ENCODE measurements at regions of chr16 and their contacts with region 1.

Region 1: GRCh38 chr16:75486676-75487313 is 8.4 kb downstream of the CHST6 start:
- DNase-seq: no peak
- ATAC-seq: no peak
- H3K4me3 ChIP-seq: no peak overlapping the region
- H3K27ac ChIP-seq: no peak overlapping the region
- H3K4me1 ChIP-seq: no peaks in the 10 kb centered on the region
- H3K27me3 ChIP-seq: no peaks in the 10 kb centered on the region
- CTCF ChIP-seq: no peak
- POLR2A ChIP-seq: no peak

Region 2: DNA sequence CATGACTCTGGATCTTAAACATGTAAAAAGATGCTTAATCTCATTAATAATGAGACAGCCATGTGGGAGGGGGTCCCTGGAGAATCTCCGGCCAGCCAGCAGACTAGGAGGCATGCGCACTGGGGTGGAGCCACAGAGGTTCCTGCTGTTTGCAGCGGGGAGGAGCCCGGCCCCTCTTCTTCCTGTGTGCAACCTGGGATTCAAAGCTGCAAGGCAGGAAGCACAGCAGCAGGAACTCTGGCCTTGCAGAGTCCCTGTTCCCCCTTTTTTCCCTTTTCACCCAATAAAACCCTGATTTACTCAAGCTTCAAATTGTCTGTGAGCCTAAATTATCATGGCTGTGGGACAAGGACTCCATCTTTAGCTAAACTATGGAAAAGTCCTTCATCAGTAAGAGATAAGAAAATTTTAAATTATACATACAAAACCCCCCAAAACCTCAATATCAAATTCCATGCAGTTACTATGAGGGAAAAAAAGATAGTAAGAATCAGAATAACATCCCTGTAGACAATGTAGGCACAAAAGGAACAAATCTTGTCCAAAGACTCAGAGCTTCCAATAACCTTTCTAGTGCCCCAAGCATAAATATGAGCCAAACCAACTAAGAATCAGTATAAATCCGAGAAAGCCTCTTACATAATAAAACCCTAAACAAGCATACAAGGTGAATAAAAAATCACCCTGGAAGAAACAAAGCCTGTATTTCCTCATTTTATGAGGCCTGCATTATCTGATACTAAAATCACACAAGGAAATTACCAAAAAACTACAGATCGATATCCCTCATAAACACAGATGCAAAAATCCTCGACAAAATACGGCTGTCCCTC is 65.6 kb before region 1 on chr16:
- intact Hi-C with region 1: no loop called
- DNase-seq: peak; percentile 53 to 65 (median 56)
- ATAC-seq: peak; percentile 60 to 78 (median 70)
- H3K4me3 ChIP-seq: no peak overlapping the region
- H3K27ac ChIP-seq: no peak overlapping the region
- H3K4me1 ChIP-seq: peaks cover 0 to 6% (median 0%) of the 10 kb centered on the region in 4 donors
- H3K27me3 ChIP-seq: no peaks in the 10 kb centered on the region
- CTCF ChIP-seq: no peak
- POLR2A ChIP-seq: no peak

Region 3: GRCh38 chr16:75534560-75535205 is 47.9 kb after region 1 on chr16:
- intact Hi-C with region 1: loop called in 1 of 2 experiments (anchors 10 kb)
- DNase-seq: no peak
- ATAC-seq: no peak
- H3K4me3 ChIP-seq: no peak overlapping the region
- H3K27ac ChIP-seq: no peak overlapping the region
- H3K4me1 ChIP-seq: no peaks in the 10 kb centered on the region
- H3K27me3 ChIP-seq: no peaks in the 10 kb centered on the region
- CTCF ChIP-seq: no peak
- POLR2A ChIP-seq: no peak

Region 4: GRCh38 chr16:75622761-75623605 is 136.2 kb after region 1 on chr16 and contains the start of gene ADAT1:
- intact Hi-C with region 1: no loop called
- DNase-seq: peak; percentile 98 to 99 (median 99)
- ATAC-seq: peak; percentile 95 to 97 (median 96)
- H3K4me3 ChIP-seq: peak within 1 kb of the TSS; percentile 71 to 86 (median 85)
- H3K27ac ChIP-seq: peak within 1 kb of the TSS; percentile 62 to 90 (median 81)
- H3K4me1 ChIP-seq: peaks cover 0 to 11% (median 4%) of the 10 kb centered on the region in 4 donors
- H3K27me3 ChIP-seq: no peaks in the 10 kb centered on the region
- CTCF ChIP-seq: no peak
- POLR2A ChIP-seq: peak; percentile 78
- total RNA-seq, gene ADAT1: 17.7 to 29.7 (median 20.7) TPM

Measured in right lobe of liver (tissue), 6 donors.